ENCODE measurements at regions of chr10 and their contacts with region 1.

Region 1: DNA sequence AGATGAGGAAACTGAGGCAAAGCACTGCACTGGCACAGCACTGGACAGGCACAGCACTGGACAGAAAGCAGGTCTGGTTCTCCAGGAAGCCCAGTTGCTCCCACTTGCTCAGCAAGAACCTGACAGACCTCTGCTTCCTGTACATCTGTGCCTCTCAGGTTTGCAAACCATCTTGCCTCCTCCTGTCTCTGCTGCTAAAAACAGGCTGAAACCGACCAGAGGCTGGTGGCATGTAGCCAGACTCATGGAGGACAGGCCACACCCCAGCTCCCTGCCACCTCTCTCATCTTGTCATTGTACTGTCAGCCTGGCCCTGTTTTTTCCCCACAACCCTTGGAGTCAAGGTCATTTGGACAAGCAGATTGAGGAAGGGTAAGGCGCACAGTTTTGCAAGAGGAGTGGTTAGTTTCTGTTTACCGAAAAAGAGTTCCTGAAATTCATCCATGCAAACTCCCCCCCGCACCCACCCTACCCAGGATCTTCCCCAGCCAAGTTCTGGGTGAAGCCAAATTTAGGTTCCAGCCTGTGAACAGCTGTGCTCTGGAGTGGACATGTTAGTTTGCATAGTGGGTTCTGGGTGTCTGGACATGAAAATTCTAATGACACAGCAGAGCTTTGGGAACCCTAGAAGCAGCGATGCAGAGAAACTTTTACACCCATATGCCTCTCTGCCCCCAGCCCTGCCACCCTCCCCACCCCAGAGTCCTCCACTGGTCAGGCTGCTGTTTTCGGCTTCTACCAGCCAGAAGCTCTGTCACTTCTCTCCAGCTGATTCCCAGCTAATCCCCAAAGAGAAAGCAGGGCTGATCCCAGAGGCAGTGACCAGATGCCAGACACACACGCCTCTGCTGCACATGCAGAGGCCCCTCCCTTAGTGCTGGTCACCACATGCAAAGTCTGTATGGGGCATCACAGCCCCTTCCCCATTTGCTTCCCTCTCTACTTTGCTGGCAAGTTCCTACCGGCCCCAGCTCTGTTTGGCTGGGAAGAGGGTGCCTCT is 8.5 kb upstream of the C10orf105 start:
- DNase-seq: peak; percentile 86
- H3K4me3 Mint-ChIP-seq: peak overlapping the region; percentile 78
- H3K27ac Mint-ChIP-seq: peak overlapping the region; percentile 98
- H3K4me1 Mint-ChIP-seq: peaks cover 69% of the 10 kb centered on the region
- H3K27me3 Mint-ChIP-seq: no peaks in the 10 kb centered on the region

Region 2: GRCh38 chr10:71527135-71527534 is 200.9 kb before region 1 on chr10:
- intact Hi-C with region 1: no loop called
- DNase-seq: no peak
- H3K4me3 Mint-ChIP-seq: no peak overlapping the region
- H3K27ac Mint-ChIP-seq: no peak overlapping the region
- H3K4me1 Mint-ChIP-seq: peaks cover 9% of the 10 kb centered on the region
- H3K27me3 Mint-ChIP-seq: peaks cover 5% of the 10 kb centered on the region

Region 3: GRCh38 chr10:71696628-71697326 is 31.3 kb before region 1 on chr10:
- intact Hi-C with region 1: loop called (anchors 1 kb)
- DNase-seq: peak; percentile 90
- H3K4me3 Mint-ChIP-seq: no peak overlapping the region
- H3K27ac Mint-ChIP-seq: no peak overlapping the region
- H3K4me1 Mint-ChIP-seq: peaks cover 39% of the 10 kb centered on the region
- H3K27me3 Mint-ChIP-seq: no peaks in the 10 kb centered on the region

Region 4: DNA sequence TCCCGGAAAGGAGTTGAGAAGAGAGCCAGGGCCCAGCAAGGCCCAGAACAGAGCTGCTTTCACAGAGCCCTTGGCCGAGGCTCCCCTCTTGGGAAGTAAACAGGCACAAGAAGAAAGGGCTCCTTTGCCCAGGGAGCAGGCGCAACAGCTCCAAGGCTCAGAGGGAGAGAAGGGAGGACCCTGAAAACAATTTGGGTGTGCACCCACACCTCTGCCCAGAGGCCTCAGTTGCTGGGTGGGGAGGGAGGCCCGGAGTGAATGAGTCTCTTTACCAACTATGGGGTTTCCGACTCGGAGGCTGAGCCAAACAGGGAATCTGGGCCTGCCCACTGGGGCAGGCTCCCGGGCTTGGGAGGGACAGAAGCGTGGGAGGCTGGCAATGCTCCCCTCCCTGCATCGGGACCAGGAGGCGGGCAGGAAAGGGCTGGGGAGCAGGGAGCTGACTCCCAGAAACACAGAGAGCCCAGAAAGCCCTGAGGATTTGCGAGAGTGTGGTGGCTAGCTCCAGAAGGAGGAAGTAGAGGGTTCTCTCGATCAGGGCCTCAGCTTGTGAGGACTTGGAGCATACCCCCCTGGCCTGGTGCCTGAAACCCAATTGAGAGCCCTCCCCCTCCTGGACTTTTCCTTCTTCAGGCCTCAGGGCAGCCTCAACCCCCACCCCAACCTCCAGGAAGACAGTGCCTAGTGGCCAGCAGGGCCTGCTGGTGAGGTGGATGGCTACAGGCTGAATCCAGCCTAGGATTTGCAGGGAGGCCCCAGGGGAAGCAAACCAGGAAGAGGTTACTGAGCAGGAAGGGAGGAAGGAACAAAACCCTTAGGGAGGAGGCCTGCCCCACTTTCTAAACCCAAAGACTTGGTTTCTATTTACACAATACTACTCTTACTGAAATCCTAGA is 14.7 kb before region 1 on chr10:
- intact Hi-C with region 1: loop called (anchors 1 kb)
- DNase-seq: peak; percentile 81
- H3K4me3 Mint-ChIP-seq: peak overlapping the region; percentile 77
- H3K27ac Mint-ChIP-seq: peak overlapping the region; percentile 97
- H3K4me1 Mint-ChIP-seq: peaks cover 52% of the 10 kb centered on the region
- H3K27me3 Mint-ChIP-seq: no peaks in the 10 kb centered on the region

Region 5: GRCh38 chr10:71740069-71740468 is 12.0 kb after region 1 on chr10:
- intact Hi-C with region 1: loop called (anchors 1 kb)
- DNase-seq: no peak
- H3K4me3 Mint-ChIP-seq: no peak overlapping the region
- H3K27ac Mint-ChIP-seq: peak overlapping the region; percentile 86
- H3K4me1 Mint-ChIP-seq: peaks cover 85% of the 10 kb centered on the region
- H3K27me3 Mint-ChIP-seq: no peaks in the 10 kb centered on the region

Region 6: GRCh38 chr10:71748671-71749191 is 20.7 kb after region 1 on chr10:
- intact Hi-C with region 1: loop called (anchors 1 kb)
- DNase-seq: peak; percentile 95
- H3K4me3 Mint-ChIP-seq: peak overlapping the region; percentile 78
- H3K27ac Mint-ChIP-seq: peak overlapping the region; percentile 99
- H3K4me1 Mint-ChIP-seq: peaks cover 91% of the 10 kb centered on the region
- H3K27me3 Mint-ChIP-seq: no peaks in the 10 kb centered on the region

Region 7: DNA sequence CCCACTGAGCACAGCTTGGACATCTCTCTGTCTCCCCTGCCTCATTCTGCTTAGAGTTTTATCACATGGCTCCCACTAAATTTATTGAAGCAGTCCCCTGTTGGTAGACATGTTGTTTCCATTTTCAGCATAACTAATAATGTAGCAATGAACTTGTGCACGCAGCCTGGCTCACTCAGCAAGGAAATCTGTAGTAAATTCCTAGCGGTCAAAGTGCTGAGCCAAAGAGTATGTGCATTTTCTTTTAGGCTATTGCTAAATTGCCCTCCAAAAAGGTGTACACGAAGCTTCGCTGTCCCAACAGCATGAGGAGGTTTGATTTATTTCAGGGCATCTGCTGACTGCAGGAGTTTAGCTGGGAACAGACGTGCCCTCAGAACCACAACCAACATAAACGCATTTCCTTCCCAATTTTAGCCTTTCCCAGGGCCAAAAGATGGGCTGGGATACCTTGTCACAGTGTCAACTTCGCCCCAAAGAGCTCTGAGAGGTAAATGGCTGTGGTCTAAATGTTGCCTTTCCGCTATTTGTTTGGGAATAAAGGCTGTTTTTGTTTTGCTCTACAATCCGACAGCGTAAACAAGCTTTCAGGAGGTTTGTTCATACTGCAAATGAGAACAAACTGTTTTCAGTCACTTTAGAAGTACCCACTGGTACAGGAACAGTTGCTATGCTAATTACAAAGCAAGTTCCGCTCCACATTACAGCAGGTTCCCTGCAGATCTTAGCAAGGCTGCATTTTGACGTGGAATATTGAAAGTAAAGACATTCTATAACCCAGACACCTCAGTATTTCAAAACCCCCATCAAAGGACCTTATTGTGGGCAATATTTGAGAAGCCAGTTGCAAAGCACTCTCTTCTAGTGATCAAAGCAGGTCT is 28.5 kb after region 1 on chr10:
- intact Hi-C with region 1: loop called (anchors 1 kb)
- DNase-seq: peak; percentile 82
- H3K4me3 Mint-ChIP-seq: peak overlapping the region; percentile 74
- H3K27ac Mint-ChIP-seq: peak overlapping the region; percentile 92
- H3K4me1 Mint-ChIP-seq: peaks cover 74% of the 10 kb centered on the region
- H3K27me3 Mint-ChIP-seq: no peaks in the 10 kb centered on the region

Region 8: GRCh38 chr10:71822448-71822763 is 94.4 kb after region 1 on chr10:
- intact Hi-C with region 1: no loop called
- DNase-seq: no peak
- H3K4me3 Mint-ChIP-seq: no peak overlapping the region
- H3K27ac Mint-ChIP-seq: no peak overlapping the region
- H3K4me1 Mint-ChIP-seq: peaks cover 9% of the 10 kb centered on the region
- H3K27me3 Mint-ChIP-seq: no peaks in the 10 kb centered on the region

Measured in activated CD4-positive, alpha-beta T cell treated with anti-CD3 and anti-CD28 coated beads, Interleukin-2, amount 10 ng/mL, durations not matched to agents 24 days and 14 days (primary cell).